Caco-2 (cell line): ENCODE measurements at regions of chr1 and their contacts with region 1.

Region 1: DNA sequence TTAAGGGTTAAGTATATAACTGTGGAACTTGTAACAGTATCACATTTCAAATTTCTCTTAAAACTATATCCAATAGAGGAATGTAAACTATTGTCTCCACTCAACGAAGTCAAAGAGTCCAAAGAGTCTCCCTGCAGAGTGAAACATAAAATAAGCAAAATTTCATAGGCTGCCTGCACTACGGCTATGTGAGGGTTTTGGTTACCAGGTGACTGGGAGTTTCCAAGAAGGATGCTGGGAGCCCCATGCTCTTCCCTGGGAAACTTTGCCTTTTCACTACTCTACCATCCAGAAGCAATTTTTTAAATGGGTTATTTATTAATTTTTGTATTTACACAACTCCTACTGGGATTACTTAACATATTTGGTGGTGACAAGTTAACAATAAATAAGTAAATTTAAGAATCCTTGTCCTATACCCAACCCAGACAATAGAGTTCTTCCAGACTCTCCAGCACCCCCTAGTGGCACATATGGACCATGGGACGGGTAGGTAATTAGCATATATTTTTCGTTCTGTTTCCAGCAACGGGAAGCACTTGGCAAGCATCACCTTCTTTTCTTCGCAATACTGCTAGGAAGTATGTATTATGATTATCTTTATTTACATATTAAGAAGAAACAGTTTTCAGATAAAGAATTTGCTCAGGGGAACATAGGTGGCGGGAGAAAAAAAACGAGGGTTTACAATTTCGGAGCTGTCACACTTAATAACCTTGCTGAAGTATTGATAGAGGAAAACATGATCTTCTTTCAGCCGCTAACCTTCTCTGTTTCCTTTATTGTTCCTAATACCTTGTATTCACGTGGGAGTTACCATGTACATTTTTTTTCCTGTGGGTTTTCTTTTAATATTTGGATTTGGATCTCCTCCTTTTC is 3.5 kb downstream of the FMO2 start:
- DNase-seq: peak; percentile 57 to 62
- H3K4me3 ChIP-seq: no peak overlapping the region
- H3K4me3 Mint-ChIP-seq: no peak overlapping the region
- H3K27ac Mint-ChIP-seq: no peak overlapping the region
- H3K4me1 ChIP-seq: no peaks in the 10 kb centered on the region
- H3K4me1 Mint-ChIP-seq: no peaks in the 10 kb centered on the region
- H3K27me3 ChIP-seq: no peaks in the 10 kb centered on the region
- H3K27me3 Mint-ChIP-seq: no peaks in the 10 kb centered on the region
- CTCF ChIP-seq: peak; percentile 77 to 79

Region 2: DNA sequence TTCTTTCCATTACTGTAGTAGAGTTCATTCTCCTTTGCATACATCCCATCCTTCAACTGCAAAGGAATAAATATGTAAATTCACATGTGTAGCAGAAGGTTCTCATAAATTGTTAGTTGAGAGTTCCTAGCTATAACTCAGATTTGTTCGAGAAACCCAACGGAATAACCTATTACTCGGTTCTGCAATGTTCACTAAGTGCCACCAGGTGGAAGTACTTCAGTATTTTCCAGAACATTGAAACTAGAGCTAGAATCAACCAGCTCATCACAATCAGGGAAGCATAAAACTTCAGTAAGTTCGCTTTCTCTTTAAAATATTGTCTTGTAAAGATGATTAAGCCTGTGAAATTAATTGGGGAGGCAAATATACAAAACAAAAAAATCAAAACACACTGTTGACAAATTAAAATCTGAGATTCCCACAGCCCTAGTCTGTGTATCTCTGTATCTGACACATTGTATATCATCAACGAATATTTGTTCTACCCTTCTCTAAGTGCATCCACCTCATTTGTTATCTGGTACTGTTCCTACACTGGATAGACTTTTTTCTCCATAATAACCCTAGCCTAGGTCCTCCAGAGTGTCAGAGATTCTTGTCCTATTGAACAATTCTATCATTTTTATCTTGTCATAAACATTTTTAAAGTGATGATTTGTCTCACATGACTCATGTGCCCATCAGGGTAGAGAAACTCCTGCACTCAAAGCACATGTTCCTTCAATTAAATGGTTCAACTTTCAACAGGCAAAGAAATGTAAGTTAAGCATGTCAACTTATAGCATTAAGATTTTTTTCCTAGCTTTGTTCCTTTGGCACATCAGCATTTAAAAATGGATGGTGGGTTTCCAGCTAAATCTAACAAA is 221.4 kb before region 1 on chr1:
- CTCF ChIA-PET with region 1: interaction called, 4 read pairs
- POLR2A ChIA-PET with region 1: no interaction called
- intact Hi-C with region 1: loop called (anchors 1 kb)
- DNase-seq: peak in 1 of 2 experiments; percentile 25
- H3K4me3 ChIP-seq: no peak overlapping the region
- H3K4me3 Mint-ChIP-seq: no peak overlapping the region
- H3K27ac Mint-ChIP-seq: no peak overlapping the region
- H3K4me1 ChIP-seq: no peaks in the 10 kb centered on the region
- H3K4me1 Mint-ChIP-seq: no peaks in the 10 kb centered on the region
- H3K27me3 ChIP-seq: no peaks in the 10 kb centered on the region
- H3K27me3 Mint-ChIP-seq: no peaks in the 10 kb centered on the region
- CTCF ChIP-seq: peak; percentile 60 to 66

Region 3: GRCh38 chr1:171081314-171081753 is 107.3 kb before region 1 on chr1:
- CTCF ChIA-PET with region 1: interaction called, 10 read pairs
- POLR2A ChIA-PET with region 1: no interaction called
- intact Hi-C with region 1: loop called (anchors 1 kb)
- DNase-seq: peak in 1 of 2 experiments; percentile 4
- H3K4me3 ChIP-seq: no peak overlapping the region
- H3K4me3 Mint-ChIP-seq: no peak overlapping the region
- H3K27ac Mint-ChIP-seq: no peak overlapping the region
- H3K4me1 ChIP-seq: peaks cover 7% of the 10 kb centered on the region; the same call in 1 of the 2 replicates
- H3K4me1 Mint-ChIP-seq: no peaks in the 10 kb centered on the region
- H3K27me3 ChIP-seq: no peaks in the 10 kb centered on the region
- H3K27me3 Mint-ChIP-seq: no peaks in the 10 kb centered on the region
- CTCF ChIP-seq: peak; percentile 21 to 40

Region 4: GRCh38 chr1:171137580-171137979 is 51.0 kb before region 1 on chr1:
- CTCF ChIA-PET with region 1: no interaction called
- POLR2A ChIA-PET with region 1: no interaction called
- intact Hi-C with region 1: loop called (anchors 1 kb)
- DNase-seq: no peak
- H3K4me3 ChIP-seq: no peak overlapping the region
- H3K4me3 Mint-ChIP-seq: no peak overlapping the region
- H3K27ac Mint-ChIP-seq: no peak overlapping the region
- H3K4me1 ChIP-seq: no peaks in the 10 kb centered on the region
- H3K4me1 Mint-ChIP-seq: peaks cover 6% of the 10 kb centered on the region
- H3K27me3 ChIP-seq: no peaks in the 10 kb centered on the region
- H3K27me3 Mint-ChIP-seq: no peaks in the 10 kb centered on the region
- CTCF ChIP-seq: no peak

Region 5: DNA sequence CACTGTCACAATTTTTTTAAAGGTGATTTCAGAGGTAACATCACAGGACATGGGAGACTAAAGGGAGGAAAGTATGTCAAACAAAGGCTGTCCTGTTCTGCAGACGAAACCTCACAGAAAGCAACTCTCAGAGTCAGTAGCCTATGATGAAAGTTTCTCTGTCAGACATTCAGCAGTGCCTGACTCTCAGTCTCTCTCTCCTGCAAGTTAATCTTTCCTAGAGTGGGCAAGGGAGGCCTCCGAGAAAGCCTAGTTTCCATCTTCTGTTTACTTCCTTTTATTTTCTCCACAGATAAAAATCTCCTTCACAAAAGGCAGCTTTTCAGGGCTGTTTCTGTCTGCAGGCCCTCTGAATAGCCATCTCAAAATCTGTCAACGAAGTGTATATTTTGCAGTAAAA is 28.4 kb before region 1 on chr1:
- CTCF ChIA-PET with region 1: no interaction called
- POLR2A ChIA-PET with region 1: no interaction called
- intact Hi-C with region 1: loop called (anchors 1 kb)
- DNase-seq: peak; percentile 54 to 56
- H3K4me3 ChIP-seq: no peak overlapping the region
- H3K4me3 Mint-ChIP-seq: peak overlapping the region; percentile 54
- H3K27ac Mint-ChIP-seq: peak overlapping the region; percentile 88
- H3K4me1 ChIP-seq: peaks cover 35% of the 10 kb centered on the region
- H3K4me1 Mint-ChIP-seq: peaks cover 29% of the 10 kb centered on the region
- H3K27me3 ChIP-seq: no peaks in the 10 kb centered on the region
- H3K27me3 Mint-ChIP-seq: no peaks in the 10 kb centered on the region
- CTCF ChIP-seq: no peak

Region 6: GRCh38 chr1:171210355-171210754 is 21.7 kb after region 1 on chr1:
- CTCF ChIA-PET with region 1: no interaction called
- POLR2A ChIA-PET with region 1: no interaction called
- intact Hi-C with region 1: loop called (anchors 2 kb)
- DNase-seq: peak; percentile 49 to 57
- H3K4me3 ChIP-seq: no peak overlapping the region
- H3K4me3 Mint-ChIP-seq: no peak overlapping the region
- H3K27ac Mint-ChIP-seq: no peak overlapping the region
- H3K4me1 ChIP-seq: peaks cover 27% of the 10 kb centered on the region
- H3K4me1 Mint-ChIP-seq: peaks cover 11% of the 10 kb centered on the region
- H3K27me3 ChIP-seq: no peaks in the 10 kb centered on the region
- H3K27me3 Mint-ChIP-seq: no peaks in the 10 kb centered on the region
- CTCF ChIP-seq: no peak

Region 7: GRCh38 chr1:171226747-171227370 is 38.2 kb after region 1 on chr1:
- CTCF ChIA-PET with region 1: interaction called, 4 read pairs
- POLR2A ChIA-PET with region 1: no interaction called
- intact Hi-C with region 1: loop called (anchors 1 kb)
- DNase-seq: peak; percentile 60 to 66
- H3K4me3 ChIP-seq: no peak overlapping the region
- H3K4me3 Mint-ChIP-seq: no peak overlapping the region
- H3K27ac Mint-ChIP-seq: no peak overlapping the region
- H3K4me1 ChIP-seq: no peaks in the 10 kb centered on the region
- H3K4me1 Mint-ChIP-seq: peaks cover 6% of the 10 kb centered on the region
- H3K27me3 ChIP-seq: no peaks in the 10 kb centered on the region
- H3K27me3 Mint-ChIP-seq: no peaks in the 10 kb centered on the region
- CTCF ChIP-seq: peak; percentile 80 to 83

Region 8: DNA sequence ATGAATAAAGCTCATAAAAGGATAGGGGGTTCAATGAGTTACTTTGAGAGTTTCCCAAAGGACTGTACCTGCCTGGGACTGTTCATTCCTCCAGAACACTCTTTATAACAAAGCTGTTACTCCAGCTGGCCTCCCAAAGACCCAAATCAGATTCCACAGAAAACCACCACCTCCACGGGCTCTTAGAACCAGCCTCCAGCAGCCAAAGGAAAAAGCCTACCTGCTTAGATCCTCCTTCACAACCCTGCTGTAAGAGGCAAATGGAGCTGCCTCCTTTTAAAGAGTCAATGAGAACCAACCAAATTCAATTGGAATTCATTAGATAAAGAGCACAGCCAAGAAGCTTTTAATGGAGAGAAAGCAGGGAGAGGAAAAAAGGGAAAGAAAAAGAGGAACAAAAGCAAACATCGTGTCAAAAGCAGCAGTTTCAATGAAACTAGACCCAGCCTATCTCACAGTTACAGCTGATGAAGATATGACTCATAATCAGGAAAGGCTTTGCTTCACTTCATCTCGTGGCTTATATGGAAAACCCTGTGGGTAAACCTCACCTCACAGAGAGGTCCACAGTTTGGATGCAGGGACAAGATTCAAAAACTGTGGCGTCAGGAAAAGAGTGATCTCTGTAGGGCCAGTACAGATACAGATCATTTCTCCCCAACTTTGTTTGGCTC is 97.5 kb after region 1 on chr1:
- CTCF ChIA-PET with region 1: no interaction called
- POLR2A ChIA-PET with region 1: no interaction called
- intact Hi-C with region 1: no loop called
- DNase-seq: no peak
- H3K4me3 ChIP-seq: no peak overlapping the region
- H3K4me3 Mint-ChIP-seq: no peak overlapping the region
- H3K27ac Mint-ChIP-seq: no peak overlapping the region
- H3K4me1 ChIP-seq: no peaks in the 10 kb centered on the region
- H3K4me1 Mint-ChIP-seq: no peaks in the 10 kb centered on the region
- H3K27me3 ChIP-seq: no peaks in the 10 kb centered on the region
- H3K27me3 Mint-ChIP-seq: no peaks in the 10 kb centered on the region
- CTCF ChIP-seq: no peak